Heart right ventricle (tissue), 16 donors: ENCODE measurements at regions of chr9 and their contacts with region 1.

Region 1: DNA sequence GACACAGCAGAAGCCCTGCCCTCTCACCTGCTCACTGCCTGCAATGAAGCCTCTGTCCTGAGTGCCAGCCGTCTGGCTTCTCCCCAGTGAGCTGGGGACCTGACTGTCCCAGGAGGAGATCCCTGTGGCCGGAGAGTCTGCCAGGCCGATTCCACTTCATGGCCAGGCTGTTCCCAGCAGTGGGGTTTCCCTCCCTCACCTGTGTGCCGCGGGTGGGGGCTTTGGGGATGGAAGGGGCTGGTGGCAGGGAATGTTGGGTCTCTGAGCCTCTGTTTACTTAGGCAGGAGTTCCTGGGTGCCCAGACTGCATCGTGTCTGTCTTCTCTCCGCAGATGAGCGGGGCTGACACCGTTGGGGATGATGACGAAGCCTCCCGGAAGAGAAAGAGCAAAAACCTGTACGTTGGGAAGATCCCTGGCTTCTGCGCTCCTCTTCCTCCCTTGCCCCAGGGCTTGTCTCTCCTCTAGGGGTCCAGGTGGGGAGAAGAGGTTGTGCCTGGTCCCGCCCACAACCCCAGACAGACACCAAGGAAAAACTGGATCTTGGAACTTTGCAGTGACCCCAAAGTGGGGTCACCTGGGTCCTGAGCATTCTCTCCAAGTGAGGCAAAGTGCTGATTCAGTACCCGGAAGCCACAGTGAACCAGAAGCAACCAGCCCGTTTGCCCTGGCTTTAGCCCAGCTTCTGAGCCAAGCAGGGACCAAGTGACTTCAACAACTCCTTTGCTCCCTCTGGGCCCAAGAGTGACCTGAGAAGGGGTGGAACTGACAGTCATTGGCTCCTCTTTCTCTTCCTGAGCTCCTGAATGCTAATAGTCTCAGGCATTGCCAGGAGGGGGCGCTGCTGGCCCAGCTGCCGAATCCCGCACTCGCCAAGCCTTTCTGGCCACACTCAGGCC is 127.7 kb downstream of the RGS3 start:
- DNase-seq: peak; percentile 85
- ATAC-seq: peak in 7 of 8 donors; percentile 14 to 31 (median 25)
- H3K4me3 ChIP-seq: no peak overlapping the region
- H3K27ac ChIP-seq: peak overlapping the region in 9 of 10 donors; percentile 57 to 98 (median 81)
- H3K4me1 ChIP-seq: peaks cover 37 to 94% (median 87%) of the 10 kb centered on the region in 9 donors
- H3K27me3 ChIP-seq: no peaks in the 10 kb centered on the region
- CTCF ChIP-seq: peak; percentile 92 to 98 (median 96)

Region 2: GRCh38 chr9:113247640-113248039 is 343.6 kb before region 1 on chr9:
- intact Hi-C with region 1: no loop called
- DNase-seq: no peak
- ATAC-seq: no peak
- H3K4me3 ChIP-seq: no peak overlapping the region
- H3K27ac ChIP-seq: no peak overlapping the region
- H3K4me1 ChIP-seq: peaks cover 0 to 9% (median 0%) of the 10 kb centered on the region in 9 donors
- H3K27me3 ChIP-seq: no peaks in the 10 kb centered on the region
- CTCF ChIP-seq: no peak

Region 3: DNA sequence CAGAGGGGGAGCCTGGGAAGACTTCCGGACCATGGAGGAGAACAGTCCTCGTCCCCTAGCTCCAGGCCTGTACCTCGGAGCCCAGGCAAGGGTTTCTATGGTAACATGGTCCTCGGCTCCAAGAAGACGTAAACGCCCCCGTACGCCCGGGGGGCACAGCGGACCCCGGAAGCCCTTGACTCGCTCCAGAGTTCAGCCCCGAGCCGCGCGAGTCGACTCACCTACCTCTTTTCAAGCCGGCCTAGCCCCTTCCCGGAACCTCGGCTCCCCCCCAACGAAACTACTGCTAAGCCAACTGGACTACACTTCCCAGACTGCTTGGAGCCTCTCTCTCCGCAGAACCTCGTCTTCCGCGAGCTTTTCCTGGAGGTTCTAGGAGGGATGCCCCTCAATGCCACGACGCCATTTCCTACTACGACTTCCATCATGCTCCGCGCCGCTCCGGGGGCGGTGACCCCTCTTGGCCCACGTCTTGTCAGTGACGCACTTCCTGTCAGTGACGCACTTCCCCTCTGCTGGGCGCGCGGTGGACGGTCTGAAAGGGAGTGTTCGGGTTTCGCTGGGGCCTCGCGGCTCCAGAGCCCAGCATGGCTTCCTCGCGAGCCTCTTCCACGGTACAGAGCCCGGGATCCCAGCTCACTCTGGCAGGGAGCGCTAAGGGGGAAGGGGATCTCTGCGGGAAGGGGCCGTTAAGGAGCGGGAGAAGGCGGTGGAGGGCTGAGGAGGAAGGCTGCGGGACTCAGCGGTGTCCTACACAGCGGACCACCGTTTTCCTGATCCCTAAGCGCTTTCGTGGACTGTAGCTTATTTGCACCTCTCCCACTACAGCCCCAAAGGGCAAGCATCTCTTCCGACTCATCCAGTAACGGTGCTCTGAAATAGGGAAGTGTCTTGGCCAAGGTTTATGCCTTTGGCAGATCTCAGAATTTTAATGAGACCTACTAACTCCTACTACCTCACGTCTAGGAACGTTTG is 315.8 kb before region 1 on chr9 and contains the starts of genes CDC26 and PRPF4:
- intact Hi-C with region 1: loop called in 6 of 10 experiments (anchors 5 to 10 kb)
- DNase-seq: peak; percentile 96 to 98
- ATAC-seq: peak; percentile 98 to 99 (median 98)
- H3K4me3 ChIP-seq: peak within 1 kb of the TSS; percentile 36 to 89 (median 78)
- H3K27ac ChIP-seq: peak within 1 kb of the TSS; percentile 63 to 95 (median 90)
- H3K4me1 ChIP-seq: peaks cover 5 to 50% (median 23%) of the 10 kb centered on the region in 9 donors
- H3K27me3 ChIP-seq: no peaks in the 10 kb centered on the region
- CTCF ChIP-seq: no peak
- total RNA-seq, gene CDC26: 26.7 to 39.7 (median 30.8) TPM
- total RNA-seq, gene PRPF4: 10.7 to 17.2 (median 13.3) TPM

Region 4: GRCh38 chr9:113446323-113446740 is 144.9 kb before region 1 on chr9:
- intact Hi-C with region 1: loop called (anchors 2 kb)
- DNase-seq: no peak
- ATAC-seq: peak; percentile 35 to 83 (median 71)
- H3K4me3 ChIP-seq: no peak overlapping the region
- H3K27ac ChIP-seq: peak overlapping the region in 6 of 10 donors; percentile 15 to 74 (median 40)
- H3K4me1 ChIP-seq: peaks cover 0 to 20% (median 7%) of the 10 kb centered on the region in 9 donors
- H3K27me3 ChIP-seq: no peaks in the 10 kb centered on the region
- CTCF ChIP-seq: peak; percentile 37 to 81 (median 71)

Region 5: GRCh38 chr9:113511856-113512761 is 79.1 kb before region 1 on chr9:
- intact Hi-C with region 1: loop called in 1 of 10 experiments (anchors 5 kb)
- DNase-seq: no peak
- ATAC-seq: no peak
- H3K4me3 ChIP-seq: no peak overlapping the region
- H3K27ac ChIP-seq: peak overlapping the region in 8 of 10 donors; percentile 24 to 96 (median 74)
- H3K4me1 ChIP-seq: peaks cover 11 to 66% (median 45%) of the 10 kb centered on the region in 9 donors
- H3K27me3 ChIP-seq: no peaks in the 10 kb centered on the region
- CTCF ChIP-seq: no peak

Region 6: DNA sequence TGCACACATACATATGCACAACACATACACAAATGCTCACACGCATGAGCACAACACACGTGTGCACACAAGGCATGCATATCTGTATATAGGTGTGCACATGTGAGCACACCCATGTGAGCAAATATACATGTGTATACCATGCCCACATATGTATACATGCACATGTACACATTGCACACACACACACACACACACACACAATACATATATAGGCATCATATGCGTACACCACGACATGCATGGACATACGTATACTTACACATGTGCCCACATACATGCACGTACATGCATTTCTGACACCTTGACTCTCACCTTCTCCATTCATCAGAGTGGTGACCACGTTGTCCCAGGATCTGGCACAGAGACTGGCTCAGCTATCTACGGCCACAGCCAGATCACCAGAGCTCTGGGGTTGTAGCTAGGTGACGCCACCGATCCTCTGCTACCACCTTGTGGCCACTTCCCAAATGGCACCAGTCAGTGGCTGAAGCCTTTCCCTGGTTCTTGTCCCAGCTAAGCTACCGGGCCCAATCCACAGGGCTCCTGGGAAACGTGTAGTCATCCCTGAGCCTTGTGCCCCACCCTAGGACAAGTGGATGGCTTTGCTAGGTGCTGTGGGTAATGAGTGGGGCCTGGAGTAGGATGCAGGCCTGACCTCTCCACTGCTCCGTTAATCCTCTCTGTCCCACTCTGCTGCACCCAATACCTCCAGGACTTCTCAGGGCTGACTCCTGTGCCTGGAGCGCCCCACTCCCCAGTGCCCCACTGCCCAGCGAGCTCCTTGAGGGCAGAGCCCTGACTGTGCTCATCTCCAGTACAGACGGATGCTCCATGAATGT is 66.7 kb after region 1 on chr9:
- intact Hi-C with region 1: loop called (anchors 1 to 2 kb)
- DNase-seq: peak; percentile 87 to 88
- ATAC-seq: peak; percentile 69 to 80 (median 75)
- H3K4me3 ChIP-seq: no peak overlapping the region
- H3K27ac ChIP-seq: peak overlapping the region in 6 of 10 donors; percentile 13 to 60 (median 41)
- H3K4me1 ChIP-seq: peaks cover 20 to 54% (median 39%) of the 10 kb centered on the region in 9 donors
- H3K27me3 ChIP-seq: no peaks in the 10 kb centered on the region
- CTCF ChIP-seq: peak; percentile 89 to 98 (median 95)

Region 7: GRCh38 chr9:113992276-113992951 is 401.2 kb after region 1 on chr9:
- intact Hi-C with region 1: no loop called
- DNase-seq: peak; percentile 78 to 79
- ATAC-seq: peak; percentile 58 to 87 (median 80)
- H3K4me3 ChIP-seq: peak overlapping the region in 1 of 10 donors; percentile 7
- H3K27ac ChIP-seq: peak overlapping the region in 4 of 10 donors; percentile 0 to 56 (median 6)
- H3K4me1 ChIP-seq: peaks cover 21 to 60% (median 42%) of the 10 kb centered on the region in 9 donors
- H3K27me3 ChIP-seq: no peaks in the 10 kb centered on the region
- CTCF ChIP-seq: no peak